Thyroid gland (tissue), 4 donors: ENCODE measurements at regions of chr4 and their contacts with region 1.

Region 1: GRCh38 chr4:47686294-47686872 is 151.5 kb downstream of the CORIN start:
- DNase-seq: peak; percentile 37 to 43
- H3K4me3 ChIP-seq: no peak overlapping the region
- H3K27ac ChIP-seq: no peak overlapping the region
- H3K4me1 ChIP-seq: no peaks in the 10 kb centered on the region
- H3K27me3 ChIP-seq: no peaks in the 10 kb centered on the region
- CTCF ChIP-seq: peak in 5 of 6 experiments; percentile 12 to 55 (median 52)
- POLR2A ChIP-seq: no peak

Region 2: DNA sequence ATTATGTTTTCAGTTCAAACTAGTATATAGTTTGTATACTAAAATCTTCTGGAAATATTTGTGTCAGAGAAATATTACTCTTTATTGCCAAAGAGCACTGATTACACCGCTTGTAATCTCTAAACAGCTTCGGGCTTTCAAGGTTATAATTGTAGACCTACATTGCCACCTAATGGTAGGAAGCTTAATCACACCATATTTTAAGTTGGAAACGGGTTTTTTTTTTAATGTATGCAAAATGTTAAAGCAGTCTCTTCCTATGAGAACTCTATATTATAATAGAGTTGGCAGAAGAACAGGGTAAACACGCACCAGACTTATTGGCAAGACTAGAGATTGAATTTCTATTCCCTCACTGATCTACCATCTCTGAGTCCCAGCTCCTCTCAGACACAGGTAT is 247.5 kb after region 1 on chr4:
- intact Hi-C with region 1: loop called (anchors 5 kb)
- DNase-seq: no peak
- H3K4me3 ChIP-seq: no peak overlapping the region
- H3K27ac ChIP-seq: no peak overlapping the region
- H3K4me1 ChIP-seq: no peaks in the 10 kb centered on the region
- H3K27me3 ChIP-seq: no peaks in the 10 kb centered on the region
- CTCF ChIP-seq: peak; percentile 17 to 71 (median 49)
- POLR2A ChIP-seq: no peak